Activated CD4-positive, alpha-beta T cell treated with anti-CD3 and anti-CD28 coated beads, Interleukin-2, amount 10 ng/mL, durations not matched to agents 24 days and 14 days (primary cell): ENCODE measurements at regions of chr1 and their contacts with region 1.

Region 1: DNA sequence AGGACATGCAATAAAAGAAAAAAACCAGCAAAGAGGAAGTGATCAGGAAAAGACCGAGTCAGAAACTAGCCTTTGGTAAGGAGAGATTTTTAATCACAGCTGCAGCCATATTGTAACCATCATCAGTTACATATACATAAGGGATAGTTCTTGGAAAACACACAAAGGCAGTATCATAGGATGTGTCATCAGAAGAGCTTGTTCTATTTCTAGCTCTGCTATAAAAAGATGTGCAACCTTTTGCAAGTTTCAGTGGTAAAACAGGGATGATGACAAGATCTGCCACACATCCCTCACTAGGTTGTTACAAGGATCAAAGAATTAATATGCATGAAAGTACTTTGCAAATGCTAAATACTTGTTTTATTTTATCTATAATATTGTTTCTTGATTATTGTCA is 342.0 kb downstream of the VAV3 start:
- DNase-seq: no peak
- H3K4me3 Mint-ChIP-seq: no peak overlapping the region
- H3K27ac Mint-ChIP-seq: no peak overlapping the region
- H3K4me1 Mint-ChIP-seq: peaks cover 8% of the 10 kb centered on the region
- H3K27me3 Mint-ChIP-seq: no peaks in the 10 kb centered on the region

Region 2: GRCh38 chr1:106502659-106503058 is 1120.3 kb before region 1 on chr1:
- intact Hi-C with region 1: no loop called
- DNase-seq: no peak
- H3K4me3 Mint-ChIP-seq: no peak overlapping the region
- H3K27ac Mint-ChIP-seq: no peak overlapping the region
- H3K4me1 Mint-ChIP-seq: no peaks in the 10 kb centered on the region
- H3K27me3 Mint-ChIP-seq: no peaks in the 10 kb centered on the region

Region 3: DNA sequence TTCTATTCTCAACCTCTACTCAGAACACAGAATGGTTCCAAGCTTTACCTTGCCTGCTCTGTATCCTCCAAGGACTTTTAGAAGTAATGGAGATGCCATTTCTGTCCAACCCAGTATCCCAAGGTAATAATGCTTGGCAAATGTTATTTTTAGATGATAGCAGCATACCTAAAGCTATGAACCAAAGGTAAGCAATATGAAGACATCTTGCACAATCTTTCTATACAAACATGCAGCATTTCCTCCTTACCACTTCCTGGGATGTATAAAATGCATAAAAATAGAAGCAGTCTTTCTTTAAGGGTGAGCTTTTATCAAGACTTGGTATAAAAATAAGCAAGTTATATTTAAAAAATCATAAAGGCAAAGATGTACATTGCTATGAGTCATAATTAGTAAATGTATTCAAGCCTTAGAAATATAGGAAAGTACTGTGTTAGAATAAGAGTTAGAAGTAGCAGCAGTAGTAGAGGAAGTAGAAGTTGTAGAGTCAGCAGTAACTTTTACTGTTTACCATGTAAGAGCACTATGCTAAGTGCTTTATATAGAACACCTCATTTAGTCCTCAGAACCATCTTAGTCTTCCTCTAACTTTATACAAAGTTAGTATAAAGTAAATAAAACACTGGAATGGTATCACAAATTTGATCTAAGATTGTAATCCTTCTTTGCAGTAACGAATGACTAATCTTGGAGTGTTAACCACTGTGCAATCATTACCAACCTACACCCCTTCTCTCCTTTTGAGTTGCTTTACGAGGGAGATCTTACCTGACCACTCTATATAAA is 29.4 kb before region 1 on chr1:
- intact Hi-C with region 1: loop called (anchors 1 kb)
- DNase-seq: no peak
- H3K4me3 Mint-ChIP-seq: no peak overlapping the region
- H3K27ac Mint-ChIP-seq: no peak overlapping the region
- H3K4me1 Mint-ChIP-seq: peaks cover 8% of the 10 kb centered on the region
- H3K27me3 Mint-ChIP-seq: no peaks in the 10 kb centered on the region